ENCODE measurements at regions of chr12 and their contacts with region 1.

Region 1: GRCh38 chr12:57583008-57583831 is 7.8 kb upstream of the PIP4K2C start:
- DNase-seq: peak; percentile 91
- H3K4me3 ChIP-seq: no peak overlapping the region
- H3K27ac ChIP-seq: no peak overlapping the region
- H3K4me1 ChIP-seq: no peaks in the 10 kb centered on the region
- H3K27me3 ChIP-seq: peaks cover 4% of the 10 kb centered on the region
- CTCF ChIP-seq: peak; percentile 98

Region 2: GRCh38 chr12:57621497-57622292 is 38.5 kb after region 1 on chr12:
- CTCF ChIA-PET with region 1: interaction called, 9 read pairs
- POLR2A ChIA-PET with region 1: no interaction called
- intact Hi-C with region 1: loop called (anchors 1 kb)
- DNase-seq: peak; percentile 61
- H3K4me3 ChIP-seq: peak overlapping the region; percentile 50
- H3K27ac ChIP-seq: no peak overlapping the region
- H3K4me1 ChIP-seq: peaks cover 8% of the 10 kb centered on the region
- H3K27me3 ChIP-seq: peaks cover 13% of the 10 kb centered on the region
- CTCF ChIP-seq: peak; percentile 95

Region 3: DNA sequence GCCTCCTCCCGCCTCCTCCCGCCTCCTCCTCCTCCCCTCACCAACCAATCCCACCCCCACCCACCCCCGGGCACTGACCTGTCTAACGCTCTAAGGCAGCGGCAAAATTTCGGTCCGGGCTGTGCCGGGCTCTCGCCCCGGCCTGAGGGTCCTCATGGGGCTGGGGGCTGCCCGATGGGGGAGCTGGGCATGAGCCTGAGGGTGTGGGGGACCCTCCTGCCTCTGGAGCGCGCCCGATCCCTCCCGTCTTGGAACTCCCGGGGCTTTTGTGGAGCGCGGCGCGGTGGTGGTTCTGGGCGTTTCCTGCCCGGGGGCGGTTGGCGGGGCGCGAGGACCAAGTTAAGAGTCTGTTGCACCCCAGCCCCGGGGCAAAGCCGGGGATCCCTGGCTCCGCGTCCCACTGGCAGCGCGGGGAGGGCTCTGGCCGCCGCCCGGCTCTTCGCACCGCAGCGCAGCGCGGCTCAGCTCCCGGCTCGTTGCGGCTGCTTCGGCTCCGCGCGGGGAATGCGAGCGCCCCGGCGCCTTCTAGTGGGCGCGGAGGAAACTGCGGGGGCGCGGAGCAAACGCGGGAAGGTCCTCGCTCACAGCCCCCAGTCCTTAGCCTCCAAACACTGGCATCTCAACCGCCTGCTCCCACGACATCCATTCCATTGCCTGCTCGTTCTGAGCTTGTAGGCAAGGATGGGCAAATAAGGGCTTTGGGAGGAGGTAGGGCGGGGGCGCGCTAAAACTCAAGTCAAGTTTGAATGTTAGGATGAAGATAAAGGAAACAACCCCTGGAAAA is 49.7 kb after region 1 on chr12 and contains the start of gene B4GALNT1:
- CTCF ChIA-PET with region 1: interaction called, 11 read pairs
- POLR2A ChIA-PET with region 1: no interaction called
- intact Hi-C with region 1: no loop called
- DNase-seq: peak; percentile 92
- H3K4me3 ChIP-seq: peak within 1 kb of the TSS; percentile 79
- H3K27ac ChIP-seq: peak within 1 kb of the TSS; percentile 61
- H3K4me1 ChIP-seq: peaks cover 15% of the 10 kb centered on the region
- H3K27me3 ChIP-seq: no peaks in the 10 kb centered on the region
- CTCF ChIP-seq: peak; percentile 85
- total RNA-seq, gene B4GALNT1: 34.5 and 39.0 TPM in 2 replicates

Region 4: DNA sequence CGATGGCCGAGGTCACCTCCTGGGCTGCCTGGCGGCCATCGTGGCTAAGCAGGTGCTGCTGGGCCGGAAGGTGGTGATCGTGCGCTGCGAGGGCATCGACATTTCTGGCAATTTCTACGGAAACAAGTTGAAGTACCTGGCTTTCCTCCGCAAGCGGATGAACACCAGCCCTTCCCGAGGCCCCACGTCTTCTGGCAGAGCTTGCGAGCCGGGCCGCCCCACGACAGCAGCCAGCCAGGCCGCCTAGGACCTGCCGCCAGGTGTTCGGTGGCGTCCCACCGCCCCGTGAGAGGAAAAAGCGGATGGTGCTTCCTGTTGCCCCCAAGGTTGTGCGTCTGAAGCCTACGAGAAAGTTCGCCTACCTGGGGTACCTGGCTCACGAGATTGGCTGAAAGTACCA is 91.5 kb after region 1 on chr12:
- CTCF ChIA-PET with region 1: no interaction called
- POLR2A ChIA-PET with region 1: no interaction called
- intact Hi-C with region 1: no loop called
- DNase-seq: no peak
- H3K4me3 ChIP-seq: no peak overlapping the region
- H3K27ac ChIP-seq: no peak overlapping the region
- H3K4me1 ChIP-seq: no peaks in the 10 kb centered on the region
- H3K27me3 ChIP-seq: no peaks in the 10 kb centered on the region
- CTCF ChIP-seq: no peak

Measured in A673 (cell line).